ENCODE measurements at regions of chr7 and their contacts with region 1.

Region 1: GRCh38 chr7:29748286-29749108 is 57.8 kb upstream of the WIPF3 start:
- DNase-seq: peak in 1 of 4 experiments; percentile 73
- ATAC-seq: peak; percentile 77
- H3K4me3 ChIP-seq: no peak overlapping the region
- H3K27ac ChIP-seq: no peak overlapping the region
- H3K4me1 ChIP-seq: peaks cover 6 to 15% of the 10 kb centered on the region in 2 experiments; a peak in 2 of 5 replicates
- H3K27me3 ChIP-seq: no peaks in the 10 kb centered on the region; a peak in 2 of 5 replicates
- CTCF ChIP-seq: peak; percentile 59 to 72 (median 70)
- EP300 ChIP-seq: no peak
- POLR2A ChIP-seq: no peak
- RAD21 ChIP-seq: peak; percentile 66 to 86

Region 2: DNA sequence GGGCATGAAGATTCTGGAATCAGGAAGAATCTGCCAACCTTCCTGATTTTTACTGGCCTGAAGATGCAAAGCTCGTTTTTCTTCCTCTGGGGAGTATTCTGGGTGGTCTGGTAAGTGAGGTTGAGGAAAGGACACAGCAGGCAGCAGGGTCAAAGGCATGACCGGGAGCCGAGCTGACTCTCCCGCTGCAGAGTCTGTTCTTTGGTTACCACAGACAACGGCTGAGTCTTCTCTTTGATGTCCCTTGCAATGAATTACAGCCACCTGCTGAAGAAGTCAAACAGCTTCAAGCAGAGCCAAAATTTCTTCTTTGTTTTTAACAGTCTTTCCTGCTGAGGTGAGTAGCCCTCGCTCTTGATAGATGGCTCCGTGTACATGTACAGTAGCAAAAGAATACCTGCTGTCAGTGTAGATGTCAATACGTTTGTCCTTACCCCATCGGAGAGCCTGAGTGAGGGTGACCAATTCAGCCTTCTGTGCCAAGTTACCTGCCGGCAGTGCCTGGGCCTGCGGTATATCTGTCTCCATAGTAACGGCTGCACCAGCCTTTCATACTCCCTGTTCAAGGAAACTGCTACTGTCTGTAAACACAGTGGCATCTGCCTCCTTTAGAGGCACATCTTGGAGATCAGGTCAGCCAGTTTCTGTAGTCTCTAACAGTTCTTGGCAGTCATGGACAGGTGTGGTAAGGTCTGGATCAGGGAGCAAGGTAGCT is 108.5 kb before region 1 on chr7:
- CTCF ChIA-PET with region 1: no interaction called
- POLR2A ChIA-PET with region 1: no interaction called
- in situ Hi-C with region 1: loop called (anchors 5 kb)
- intact Hi-C with region 1: loop called (anchors 2 kb)
- DNase-seq: no peak
- ATAC-seq: no peak
- H3K4me3 ChIP-seq: no peak overlapping the region
- H3K27ac ChIP-seq: no peak overlapping the region
- H3K4me1 ChIP-seq: peaks cover 0 to 5% of the 10 kb centered on the region in 2 experiments; a peak in 1 of 5 replicates
- H3K27me3 ChIP-seq: no peaks in the 10 kb centered on the region
- CTCF ChIP-seq: no peak
- EP300 ChIP-seq: no peak
- POLR2A ChIP-seq: no peak
- RAD21 ChIP-seq: no peak

Region 3: GRCh38 chr7:29815181-29816105 is 66.9 kb after region 1 on chr7:
- CTCF ChIA-PET with region 1: no interaction called
- POLR2A ChIA-PET with region 1: interaction called, 3 read pairs
- in situ Hi-C with region 1: no loop called
- intact Hi-C with region 1: loop called (anchors 2 kb)
- DNase-seq: no peak
- ATAC-seq: peak; percentile 77
- H3K4me3 ChIP-seq: no peak overlapping the region
- H3K27ac ChIP-seq: no peak overlapping the region
- H3K4me1 ChIP-seq: no peaks in the 10 kb centered on the region; a peak in 1 of 5 replicates
- H3K27me3 ChIP-seq: no peaks in the 10 kb centered on the region
- CTCF ChIP-seq: peak; percentile 17 to 41 (median 24); a peak in 2 of 6 replicates
- EP300 ChIP-seq: no peak
- POLR2A ChIP-seq: no peak
- RAD21 ChIP-seq: peak in 1 of 2 experiments; percentile 63; a peak in 2 of 4 replicates

Region 4: DNA sequence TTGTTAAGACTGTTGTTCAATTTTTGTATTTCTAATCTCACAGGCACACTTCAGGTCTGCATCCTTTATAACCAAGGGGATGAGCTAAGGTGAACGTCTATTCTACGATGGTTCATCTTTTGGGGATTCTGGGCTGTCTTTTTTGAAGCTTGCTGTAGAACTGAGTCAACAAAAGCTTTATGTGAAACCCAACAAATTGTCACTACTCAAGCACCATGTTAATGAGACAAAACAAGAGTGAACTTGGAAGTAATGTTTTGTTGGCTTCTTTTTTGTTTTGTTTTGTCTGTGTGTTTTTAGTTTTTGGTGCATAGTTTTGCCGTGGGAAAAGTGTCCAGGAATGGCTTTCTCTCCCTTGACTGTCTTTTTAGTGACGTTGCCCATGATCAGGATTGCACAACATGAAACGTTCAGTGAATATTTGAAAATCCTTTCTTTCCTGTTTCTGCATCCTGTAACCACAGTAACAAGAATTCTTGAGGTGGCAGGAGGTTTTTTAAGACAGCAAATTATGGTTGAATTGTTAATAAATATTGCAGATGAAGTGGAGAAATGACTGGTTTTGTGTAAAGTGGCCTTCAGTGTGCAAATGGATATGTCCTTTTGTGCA is 123.4 kb after region 1 on chr7:
- CTCF ChIA-PET with region 1: no interaction called
- POLR2A ChIA-PET with region 1: no interaction called
- in situ Hi-C with region 1: no loop called
- intact Hi-C with region 1: loop called (anchors 2 kb)
- DNase-seq: no peak
- ATAC-seq: no peak
- H3K4me3 ChIP-seq: no peak overlapping the region
- H3K27ac ChIP-seq: no peak overlapping the region
- H3K4me1 ChIP-seq: peaks cover 0 to 6% of the 10 kb centered on the region in 2 experiments; a peak in 1 of 5 replicates
- H3K27me3 ChIP-seq: no peaks in the 10 kb centered on the region
- CTCF ChIP-seq: no peak
- EP300 ChIP-seq: no peak
- POLR2A ChIP-seq: no peak
- RAD21 ChIP-seq: no peak